ENCODE measurements at regions of chr4 and their contacts with region 1.

Region 1: DNA sequence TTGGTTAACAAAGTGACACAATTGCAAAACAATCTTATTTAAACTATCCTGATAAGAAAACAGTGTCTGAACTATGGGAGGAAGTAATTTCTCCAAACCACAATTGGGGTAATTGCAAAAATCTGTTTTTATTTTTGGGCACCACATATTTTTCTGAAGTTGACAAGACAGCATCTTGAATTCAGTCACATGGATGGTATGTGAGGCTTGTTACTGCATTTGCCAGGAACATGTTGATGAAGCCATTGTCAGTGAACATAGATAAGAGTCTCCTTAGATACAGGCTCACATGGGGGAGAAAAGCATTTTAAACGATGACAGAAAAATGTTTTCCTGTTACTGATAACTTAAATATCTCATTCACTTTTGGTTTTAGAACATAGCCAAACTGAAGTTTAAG is 5.5 kb upstream of the USP53 start:
- DNase-seq: no peak
- H3K4me3 Mint-ChIP-seq: no peak overlapping the region
- H3K27ac Mint-ChIP-seq: no peak overlapping the region
- H3K4me1 Mint-ChIP-seq: peaks cover 23% of the 10 kb centered on the region
- H3K27me3 Mint-ChIP-seq: no peaks in the 10 kb centered on the region
- CTCF ChIP-seq: no peak

Region 2: DNA sequence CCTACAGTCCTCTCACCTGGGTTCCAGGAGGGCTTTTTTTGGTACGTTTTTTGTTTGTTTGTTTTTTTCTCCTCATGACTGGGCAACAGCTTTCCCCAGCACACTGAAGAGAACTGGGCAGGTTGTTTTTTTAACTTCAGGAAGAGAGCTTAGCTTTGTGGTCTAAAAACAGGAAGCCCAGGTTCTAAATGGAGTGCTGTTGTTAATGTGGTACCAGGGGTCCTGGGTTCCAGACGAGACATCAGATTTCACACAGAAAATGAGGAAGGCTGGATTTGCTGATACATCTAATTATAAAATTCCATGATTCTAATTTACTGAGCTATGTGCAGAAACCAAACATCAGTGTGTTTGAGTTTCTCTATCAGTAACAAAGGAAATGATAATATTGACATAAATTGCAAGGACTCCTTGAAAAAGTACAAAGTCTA is 67.2 kb before region 1 on chr4:
- CTCF ChIA-PET with region 1: interaction called, 5 read pairs
- POLR2A ChIA-PET with region 1: interaction called, 5 read pairs
- intact Hi-C with region 1: loop called (anchors 1 kb)
- DNase-seq: no peak
- H3K4me3 Mint-ChIP-seq: no peak overlapping the region
- H3K27ac Mint-ChIP-seq: peak overlapping the region; percentile 27
- H3K4me1 Mint-ChIP-seq: peaks cover 23% of the 10 kb centered on the region
- H3K27me3 Mint-ChIP-seq: no peaks in the 10 kb centered on the region
- CTCF ChIP-seq: no peak

Measured in MCF 10A (cell line).